ENCODE measurements at regions of chr19 and their contacts with region 1.

Region 1: GRCh38 chr19:9674663-9675357 is at the start of gene ZNF562:
- DNase-seq: peak; percentile 83
- ATAC-seq: peak; percentile 91
- H3K4me3 ChIP-seq: peak within 1 kb of the TSS; percentile 78
- H3K27ac ChIP-seq: peak within 1 kb of the TSS; percentile 88
- H3K4me1 ChIP-seq: no peaks in the 10 kb centered on the region
- H3K27me3 ChIP-seq: no peaks in the 10 kb centered on the region
- CTCF ChIP-seq: no peak
- total RNA-seq, gene ZNF562: 21.0 and 26.0 TPM in 2 replicates

Region 2: DNA sequence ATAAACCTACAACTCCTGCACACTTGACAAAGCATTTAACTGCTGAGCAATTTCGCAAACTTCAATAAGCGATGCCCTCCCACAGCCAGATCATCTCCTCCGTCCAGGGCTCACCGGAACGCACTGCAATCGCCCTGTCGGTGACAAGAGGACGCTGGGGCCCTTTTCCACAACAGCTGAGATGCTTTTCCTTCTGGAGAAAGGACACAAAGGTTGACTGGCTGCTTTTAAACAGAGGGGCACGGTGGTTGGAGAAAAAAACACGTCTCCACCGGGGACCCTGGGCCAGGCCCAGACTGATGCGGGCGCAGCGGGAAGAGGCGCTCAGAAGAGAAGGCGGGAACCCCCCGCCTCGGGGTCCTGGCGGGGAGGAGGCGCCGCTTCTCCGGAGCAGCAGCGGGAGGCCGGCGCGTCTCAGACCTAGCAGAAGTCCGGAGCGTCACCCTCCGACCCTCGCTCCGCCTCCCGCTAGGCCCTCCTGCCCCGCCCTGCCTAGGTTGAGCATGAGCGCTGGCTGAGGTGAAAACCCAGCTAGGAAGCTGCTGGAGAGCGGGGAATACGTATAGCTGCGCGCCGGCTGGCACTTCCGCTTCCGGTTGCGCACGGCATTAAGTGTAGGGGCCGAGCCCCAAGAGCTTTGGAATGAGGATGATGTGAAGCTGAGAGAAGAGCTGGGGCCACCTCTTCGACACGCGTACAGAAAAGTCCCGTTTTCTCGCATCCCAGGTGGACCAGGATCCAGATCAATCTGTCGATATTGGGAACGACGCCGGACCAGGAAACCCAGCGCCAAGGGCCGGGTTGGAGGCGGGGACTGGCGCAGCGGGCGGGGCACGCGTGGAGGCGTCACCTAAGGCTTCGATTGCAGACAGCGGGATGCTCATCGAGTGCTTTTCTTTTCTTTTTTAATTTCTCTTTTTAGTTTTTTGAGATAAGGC is 93.6 kb after region 1 on chr19 and contains the start of gene ZNF846:
- CTCF ChIA-PET with region 1: no interaction called
- POLR2A ChIA-PET with region 1: no interaction called
- intact Hi-C with region 1: loop called (anchors 1 kb)
- DNase-seq: peak; percentile 99
- ATAC-seq: peak; percentile 99
- H3K4me3 ChIP-seq: peak within 1 kb of the TSS; percentile 93
- H3K27ac ChIP-seq: peak within 1 kb of the TSS; percentile 85
- H3K4me1 ChIP-seq: peaks cover 7% of the 10 kb centered on the region; the same call in 1 of the 2 replicates
- H3K27me3 ChIP-seq: no peaks in the 10 kb centered on the region
- CTCF ChIP-seq: no peak
- total RNA-seq, gene ZNF846: 10.9 and 15.7 TPM in 2 replicates